HAP-1 (cell line): ENCODE measurements at regions of chr11 and their contacts with region 1.

Region 1: GRCh38 chr11:78564490-78565467 is 9.9 kb downstream of the NARS2 start:
- DNase-seq: peak; percentile 60 to 71
- H3K4me3 ChIP-seq: no peak overlapping the region
- H3K4me1 ChIP-seq: peaks cover 30% of the 10 kb centered on the region
- H3K27me3 ChIP-seq: no peaks in the 10 kb centered on the region

Region 2: GRCh38 chr11:78228467-78228866 is 336.3 kb before region 1 on chr11:
- in situ Hi-C with region 1: loop called (anchors 10 kb)
- DNase-seq: peak; percentile 37 to 75
- H3K4me3 ChIP-seq: no peak overlapping the region
- H3K4me1 ChIP-seq: no peaks in the 10 kb centered on the region
- H3K27me3 ChIP-seq: no peaks in the 10 kb centered on the region

Region 3: DNA sequence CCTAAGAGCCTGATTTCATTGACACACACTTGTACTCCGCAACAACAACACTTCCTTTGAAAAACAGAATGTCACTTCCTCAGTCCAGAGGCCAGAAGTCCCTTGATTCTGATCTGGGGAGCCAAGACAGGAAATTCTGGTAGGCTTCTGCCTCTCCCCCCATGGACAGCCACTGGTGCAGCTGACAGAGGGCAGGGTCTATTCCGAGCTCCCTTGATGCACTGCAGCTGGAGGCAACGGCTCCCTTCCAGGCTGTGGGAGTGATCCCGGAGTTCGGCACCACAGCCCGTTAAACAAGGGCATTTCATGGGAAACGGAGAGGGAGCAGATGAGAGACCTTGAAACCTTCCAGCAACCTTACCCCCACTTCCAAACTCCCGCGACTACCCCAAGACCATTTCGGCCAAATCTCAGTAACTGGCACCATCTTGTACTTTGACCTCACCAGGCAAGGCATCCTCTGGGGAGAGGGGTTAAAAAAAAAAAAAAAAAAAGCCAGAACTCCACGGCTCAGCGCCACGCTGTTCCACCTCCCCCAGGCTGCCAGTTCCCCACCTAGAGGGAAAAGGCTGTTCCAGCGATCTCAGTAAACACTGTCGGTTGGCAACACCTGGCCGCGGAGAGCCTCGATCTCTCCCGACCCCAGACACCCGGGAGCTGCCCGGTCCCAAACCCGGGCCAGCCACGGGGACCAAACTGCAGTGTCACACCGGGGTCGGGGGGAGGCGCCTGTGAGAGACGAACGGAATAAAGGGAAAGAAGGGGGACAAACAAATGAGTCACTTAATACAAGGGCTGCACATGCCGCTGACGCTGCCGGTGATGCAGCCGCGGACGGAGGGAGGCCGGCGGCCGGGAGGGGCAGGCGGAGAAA is 148.2 kb before region 1 on chr11:
- in situ Hi-C with region 1: loop called (anchors 5 kb)
- DNase-seq: peak; percentile 81 to 92
- H3K4me3 ChIP-seq: peak overlapping the region; percentile 72
- H3K4me1 ChIP-seq: peaks cover 11% of the 10 kb centered on the region
- H3K27me3 ChIP-seq: no peaks in the 10 kb centered on the region